Cardiac septum (tissue), 1 donor: ENCODE measurements at regions of chr3 and their contacts with region 1.

Region 1: DNA sequence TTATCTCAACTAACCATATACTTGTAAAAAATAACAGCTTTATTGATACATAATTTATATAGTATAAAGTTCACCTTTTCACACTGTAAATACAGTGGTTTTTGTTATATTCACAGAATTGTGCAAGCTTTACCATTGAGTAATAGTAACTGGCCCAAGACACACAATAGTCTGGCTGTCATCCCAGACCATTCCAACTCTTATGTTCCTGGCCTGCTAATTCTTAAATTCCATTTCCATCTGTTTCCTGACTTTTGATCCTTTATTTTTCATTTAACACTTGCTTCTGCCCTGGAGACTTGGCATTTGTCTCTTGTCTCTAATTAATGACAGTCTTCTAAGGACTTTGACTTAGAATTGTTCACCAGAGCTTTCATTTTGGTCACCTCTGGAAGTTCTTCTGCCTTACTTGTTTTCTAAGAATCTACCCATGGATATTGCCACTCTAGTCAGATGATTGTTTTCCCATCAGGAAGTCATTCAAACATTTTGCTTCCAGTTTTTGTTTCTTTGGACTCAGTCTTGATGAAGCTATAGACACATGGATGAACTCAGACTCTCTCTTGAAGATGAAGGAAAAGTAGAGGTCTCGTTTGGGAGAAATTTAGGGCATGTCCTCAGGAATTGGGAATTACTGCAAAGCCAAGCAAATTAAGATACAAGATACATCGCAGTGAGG is 27.2 kb upstream of the PLSCR4 start:
- DNase-seq: no peak

Region 2: DNA sequence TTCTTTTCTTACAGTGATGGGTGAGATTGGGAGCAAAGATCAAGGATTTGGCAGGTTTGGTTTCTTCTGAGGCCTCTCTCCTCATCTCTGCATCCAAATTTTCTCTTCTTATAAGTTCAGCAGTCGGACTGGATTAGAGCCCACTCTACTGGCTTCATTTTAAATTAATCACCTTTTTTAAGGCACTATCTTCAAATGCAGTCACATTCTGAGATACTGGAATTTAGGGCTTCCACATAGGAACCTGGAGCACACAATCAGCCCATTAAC is 29.3 kb after region 1 on chr3:
- intact Hi-C with region 1: loop called (anchors 2 kb)
- DNase-seq: no peak

Region 3: GRCh38 chr3:146342989-146343388 is 64.9 kb after region 1 on chr3:
- intact Hi-C with region 1: no loop called
- DNase-seq: no peak